Naive thymus-derived CD4-positive, alpha-beta T cell (primary cell): ENCODE measurements at regions of chr9 and their contacts with region 1.

Region 1: GRCh38 chr9:129495534-129496325 is 125.2 kb downstream of the C9orf50 start:
- DNase-seq: peak; percentile 64 to 84 (median 71)
- ATAC-seq: peak; percentile 89
- H3K4me3 ChIP-seq: peak overlapping the region; percentile 79
- H3K4me3 Mint-ChIP-seq: peak overlapping the region; percentile 73 to 87 (median 80)
- H3K27ac ChIP-seq: peak overlapping the region; percentile 35
- H3K27ac Mint-ChIP-seq: peak overlapping the region in 8 of 9 donors; percentile 11 to 92 (median 41)
- H3K4me1 ChIP-seq: peaks cover 19 to 20% of the 10 kb centered on the region in 2 donors
- H3K4me1 Mint-ChIP-seq: peaks cover 10 to 49% (median 19%) of the 10 kb centered on the region in 7 donors
- H3K27me3 ChIP-seq: no peaks in the 10 kb centered on the region
- H3K27me3 Mint-ChIP-seq: no peaks in the 10 kb centered on the region

Region 2: DNA sequence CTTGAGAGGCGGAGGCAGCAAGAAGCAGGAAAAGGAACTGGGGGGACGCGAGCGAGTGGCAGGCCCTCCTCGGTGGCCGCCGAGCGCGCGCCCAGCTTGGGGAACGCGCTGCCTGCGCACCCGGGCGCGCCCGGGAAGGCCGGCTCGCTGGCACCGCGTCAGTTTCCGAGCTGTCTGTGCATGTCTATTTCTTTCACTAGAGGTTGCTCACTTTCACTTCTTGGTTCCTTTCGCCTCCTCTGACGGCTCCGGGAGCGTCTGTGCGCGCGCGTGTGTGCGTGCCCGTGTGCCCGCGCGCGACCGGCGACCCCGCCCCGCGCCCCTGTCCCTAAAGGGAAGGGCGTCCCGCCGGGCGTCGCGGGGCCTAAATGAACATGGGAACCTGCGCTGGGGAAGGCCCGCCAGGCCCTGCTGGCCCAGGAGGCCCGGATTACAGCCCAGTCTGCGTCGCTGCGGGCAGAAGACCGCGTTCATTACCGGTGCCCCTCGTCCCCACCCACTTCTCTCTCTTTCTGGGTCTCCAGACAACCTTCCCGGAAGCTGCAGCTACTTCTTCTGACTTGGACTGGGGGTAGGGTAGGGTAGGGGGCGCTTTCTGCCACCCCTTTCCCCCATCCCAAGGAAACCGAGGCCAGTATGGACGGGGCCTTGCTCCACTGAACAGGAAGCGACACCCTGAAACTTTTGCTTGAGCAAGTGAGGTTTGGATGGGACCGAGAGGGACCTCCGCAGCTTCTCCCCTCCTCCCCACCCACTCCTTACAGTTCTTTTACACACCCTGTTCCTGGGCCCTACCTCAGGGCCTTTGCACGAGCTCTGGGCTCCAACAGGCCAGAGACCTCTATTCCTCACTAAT is 111.9 kb before region 1 on chr9:
- CTCF ChIA-PET with region 1: no interaction called
- POLR2A ChIA-PET with region 1: interaction called, 6 read pairs
- intact Hi-C with region 1: loop called in 1 of 2 experiments (anchors 2 kb)
- DNase-seq: peak; percentile 60 to 87 (median 79)
- ATAC-seq: peak; percentile 96
- H3K4me3 ChIP-seq: peak overlapping the region; percentile 62
- H3K4me3 Mint-ChIP-seq: peak overlapping the region; percentile 70 to 86 (median 82)
- H3K27ac ChIP-seq: peak overlapping the region; percentile 82
- H3K27ac Mint-ChIP-seq: peak overlapping the region; percentile 72 to 96 (median 92)
- H3K4me1 ChIP-seq: peaks cover 0 to 12% of the 10 kb centered on the region in 2 donors
- H3K4me1 Mint-ChIP-seq: peaks cover 8 to 19% (median 10%) of the 10 kb centered on the region in 7 donors
- H3K27me3 ChIP-seq: no peaks in the 10 kb centered on the region
- H3K27me3 Mint-ChIP-seq: peaks cover 0 to 9% (median 0%) of the 10 kb centered on the region in 5 donors

Region 3: DNA sequence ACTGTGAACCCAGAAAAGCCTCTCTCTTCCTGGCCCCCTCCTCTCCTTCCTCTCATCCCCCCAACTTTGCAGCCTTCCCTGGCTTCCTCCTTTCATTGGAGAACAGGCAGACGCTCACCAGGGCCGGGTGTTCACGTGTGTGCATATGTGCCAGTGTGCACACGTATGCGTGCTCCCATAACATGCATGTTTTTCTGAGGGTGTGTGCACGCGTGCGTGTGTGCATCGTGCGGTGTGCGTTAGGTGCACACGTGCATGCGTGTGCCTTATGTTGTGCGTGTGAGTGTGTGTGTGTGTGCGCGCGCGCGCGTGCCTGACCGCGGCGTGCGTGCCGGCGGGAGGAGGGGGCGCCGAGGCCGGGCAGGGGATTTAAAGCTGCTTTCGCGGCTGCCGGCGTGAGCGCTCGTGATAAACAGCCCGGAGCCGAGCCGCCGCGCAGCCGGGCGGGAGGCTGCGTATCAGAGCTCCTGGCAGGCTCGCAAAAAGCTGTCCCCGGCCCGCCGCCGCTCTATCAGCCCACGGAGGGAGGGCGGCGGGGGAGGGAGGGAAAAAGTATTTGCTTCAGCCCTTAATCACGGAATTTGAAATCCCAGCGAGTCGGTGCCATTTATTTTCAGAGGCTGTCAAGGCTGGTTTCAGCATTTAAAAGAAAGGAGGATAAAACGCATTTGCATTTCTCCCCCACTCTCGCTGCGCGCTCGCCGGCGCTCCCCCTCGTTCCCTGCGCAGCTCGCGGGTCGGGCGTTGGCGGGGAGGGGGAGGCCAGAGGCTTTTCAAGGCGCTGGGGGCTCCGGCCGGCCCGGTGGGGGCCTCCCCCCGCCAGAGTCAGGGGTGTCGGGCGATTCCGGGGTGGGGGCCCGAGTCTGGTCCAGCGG is 58.7 kb before region 1 on chr9:
- CTCF ChIA-PET with region 1: no interaction called
- POLR2A ChIA-PET with region 1: no interaction called
- intact Hi-C with region 1: loop called in 1 of 2 experiments (anchors 1 kb)
- DNase-seq: peak in 8 of 9 donors; percentile 21 to 52 (median 45)
- ATAC-seq: peak; percentile 75
- H3K4me3 ChIP-seq: peak overlapping the region; percentile 62
- H3K4me3 Mint-ChIP-seq: peak overlapping the region; percentile 80 to 93 (median 85)
- H3K27ac ChIP-seq: peak overlapping the region; percentile 32
- H3K27ac Mint-ChIP-seq: peak overlapping the region in 7 of 9 donors; percentile 25 to 89 (median 70)
- H3K4me1 ChIP-seq: peaks cover 10 to 19% of the 10 kb centered on the region in 2 donors
- H3K4me1 Mint-ChIP-seq: peaks cover 21 to 37% (median 27%) of the 10 kb centered on the region in 7 donors
- H3K27me3 ChIP-seq: peaks cover 5 to 8% of the 10 kb centered on the region in 2 donors
- H3K27me3 Mint-ChIP-seq: peaks cover 27 to 73% (median 32%) of the 10 kb centered on the region in 5 donors

Region 4: GRCh38 chr9:129482521-129483414 is 13.0 kb before region 1 on chr9:
- CTCF ChIA-PET with region 1: no interaction called
- POLR2A ChIA-PET with region 1: interaction called, 13 read pairs
- intact Hi-C with region 1: no loop called
- DNase-seq: peak in 2 of 9 donors; percentile 41 to 61
- ATAC-seq: peak; percentile 57
- H3K4me3 ChIP-seq: peak overlapping the region; percentile 35
- H3K4me3 Mint-ChIP-seq: peak overlapping the region in 9 of 10 donors; percentile 58 to 82 (median 71)
- H3K27ac ChIP-seq: peak overlapping the region; percentile 20
- H3K27ac Mint-ChIP-seq: peak overlapping the region in 3 of 9 donors; percentile 32 to 97 (median 69)
- H3K4me1 ChIP-seq: peaks cover 17 to 20% of the 10 kb centered on the region in 2 donors
- H3K4me1 Mint-ChIP-seq: peaks cover 19 to 41% (median 34%) of the 10 kb centered on the region in 7 donors
- H3K27me3 ChIP-seq: no peaks in the 10 kb centered on the region
- H3K27me3 Mint-ChIP-seq: peaks cover 0 to 8% (median 0%) of the 10 kb centered on the region in 5 donors

Region 5: GRCh38 chr9:129569502-129570449 is 74.0 kb after region 1 on chr9:
- CTCF ChIA-PET with region 1: interaction called, 3 read pairs
- POLR2A ChIA-PET with region 1: no interaction called
- intact Hi-C with region 1: loop called in 1 of 2 experiments (anchors 5 kb)
- DNase-seq: no peak
- ATAC-seq: peak; percentile 53
- H3K4me3 ChIP-seq: peak overlapping the region; percentile 17
- H3K4me3 Mint-ChIP-seq: peak overlapping the region; percentile 67 to 87 (median 80)
- H3K27ac ChIP-seq: no peak overlapping the region
- H3K27ac Mint-ChIP-seq: peak overlapping the region in 3 of 9 donors; percentile 36 to 58 (median 40)
- H3K4me1 ChIP-seq: peaks cover 3 to 8% of the 10 kb centered on the region in 2 donors
- H3K4me1 Mint-ChIP-seq: peaks cover 11 to 23% (median 14%) of the 10 kb centered on the region in 7 donors
- H3K27me3 ChIP-seq: peaks cover 0 to 8% of the 10 kb centered on the region in 2 donors
- H3K27me3 Mint-ChIP-seq: peaks cover 14 to 30% (median 26%) of the 10 kb centered on the region in 5 donors

Region 6: DNA sequence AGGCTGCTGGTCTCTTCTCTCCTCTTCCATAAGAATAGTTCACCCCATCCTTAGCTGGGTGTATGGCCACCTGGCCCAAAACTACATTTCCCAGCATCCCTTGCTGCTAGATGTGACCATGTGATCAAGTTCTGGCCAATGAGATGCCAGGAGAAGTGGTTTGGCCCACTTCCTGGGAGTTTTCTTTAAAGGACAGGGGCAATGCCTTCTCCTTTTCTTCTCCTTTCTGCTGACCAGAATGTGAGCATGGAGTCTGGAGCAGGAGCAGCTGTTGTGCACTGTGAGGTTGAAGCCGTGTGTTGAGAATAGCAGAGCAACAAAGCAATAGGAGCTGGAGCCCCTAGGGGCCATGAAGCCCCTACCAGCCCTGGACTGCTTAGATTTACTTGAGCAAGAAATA is 88.4 kb after region 1 on chr9:
- CTCF ChIA-PET with region 1: no interaction called
- POLR2A ChIA-PET with region 1: no interaction called
- intact Hi-C with region 1: loop called in 1 of 2 experiments (anchors 5 kb)
- DNase-seq: peak in 8 of 9 donors; percentile 51 to 69 (median 62)
- ATAC-seq: peak; percentile 88
- H3K4me3 ChIP-seq: no peak overlapping the region
- H3K4me3 Mint-ChIP-seq: peak overlapping the region in 7 of 10 donors; percentile 4 to 65 (median 31)
- H3K27ac ChIP-seq: peak overlapping the region; percentile 30
- H3K27ac Mint-ChIP-seq: peak overlapping the region; percentile 43 to 92 (median 76)
- H3K4me1 ChIP-seq: peaks cover 25 to 26% of the 10 kb centered on the region in 2 donors
- H3K4me1 Mint-ChIP-seq: peaks cover 15 to 88% (median 53%) of the 10 kb centered on the region in 7 donors
- H3K27me3 ChIP-seq: no peaks in the 10 kb centered on the region
- H3K27me3 Mint-ChIP-seq: no peaks in the 10 kb centered on the region

Region 7: GRCh38 chr9:130010151-130010988 is 514.6 kb after region 1 on chr9:
- CTCF ChIA-PET with region 1: no interaction called
- POLR2A ChIA-PET with region 1: no interaction called
- intact Hi-C with region 1: no loop called
- DNase-seq: peak in 3 of 9 donors; percentile 28 to 85 (median 59)
- ATAC-seq: peak; percentile 83
- H3K4me3 ChIP-seq: no peak overlapping the region
- H3K4me3 Mint-ChIP-seq: peak overlapping the region; percentile 15 to 76 (median 42)
- H3K27ac ChIP-seq: peak overlapping the region; percentile 76
- H3K27ac Mint-ChIP-seq: peak overlapping the region; percentile 78 to 96 (median 86)
- H3K4me1 ChIP-seq: peaks cover 33 to 49% of the 10 kb centered on the region in 2 donors
- H3K4me1 Mint-ChIP-seq: peaks cover 55 to 93% (median 72%) of the 10 kb centered on the region in 7 donors
- H3K27me3 ChIP-seq: no peaks in the 10 kb centered on the region
- H3K27me3 Mint-ChIP-seq: no peaks in the 10 kb centered on the region